T-cell (primary cell): ENCODE measurements at regions of chr7 and their contacts with region 1.

Region 1: GRCh38 chr7:47266131-47266706 is 315.7 kb downstream of the TNS3 start:
- DNase-seq: peak in 8 of 35 experiments; percentile 4 to 34 (median 10)
- ATAC-seq: no peak
- H3K4me3 ChIP-seq: no peak overlapping the region
- H3K4me3 Mint-ChIP-seq: no peak overlapping the region
- H3K27ac ChIP-seq: no peak overlapping the region
- H3K27ac Mint-ChIP-seq: no peak overlapping the region
- H3K4me1 ChIP-seq: no peaks in the 10 kb centered on the region
- H3K4me1 Mint-ChIP-seq: no peaks in the 10 kb centered on the region
- H3K27me3 ChIP-seq: no peaks in the 10 kb centered on the region
- H3K27me3 Mint-ChIP-seq: no peaks in the 10 kb centered on the region

Region 2: GRCh38 chr7:47281991-47282643 is 15.9 kb after region 1 on chr7:
- CTCF ChIA-PET with region 1: no interaction called
- POLR2A ChIA-PET with region 1: no interaction called
- DNase-seq: no peak
- ATAC-seq: no peak
- H3K4me3 ChIP-seq: no peak overlapping the region
- H3K4me3 Mint-ChIP-seq: no peak overlapping the region
- H3K27ac ChIP-seq: no peak overlapping the region
- H3K27ac Mint-ChIP-seq: no peak overlapping the region
- H3K4me1 ChIP-seq: no peaks in the 10 kb centered on the region
- H3K4me1 Mint-ChIP-seq: no peaks in the 10 kb centered on the region
- H3K27me3 ChIP-seq: peaks cover 0 to 6% of the 10 kb centered on the region in 2 experiments
- H3K27me3 Mint-ChIP-seq: no peaks in the 10 kb centered on the region

Region 3: DNA sequence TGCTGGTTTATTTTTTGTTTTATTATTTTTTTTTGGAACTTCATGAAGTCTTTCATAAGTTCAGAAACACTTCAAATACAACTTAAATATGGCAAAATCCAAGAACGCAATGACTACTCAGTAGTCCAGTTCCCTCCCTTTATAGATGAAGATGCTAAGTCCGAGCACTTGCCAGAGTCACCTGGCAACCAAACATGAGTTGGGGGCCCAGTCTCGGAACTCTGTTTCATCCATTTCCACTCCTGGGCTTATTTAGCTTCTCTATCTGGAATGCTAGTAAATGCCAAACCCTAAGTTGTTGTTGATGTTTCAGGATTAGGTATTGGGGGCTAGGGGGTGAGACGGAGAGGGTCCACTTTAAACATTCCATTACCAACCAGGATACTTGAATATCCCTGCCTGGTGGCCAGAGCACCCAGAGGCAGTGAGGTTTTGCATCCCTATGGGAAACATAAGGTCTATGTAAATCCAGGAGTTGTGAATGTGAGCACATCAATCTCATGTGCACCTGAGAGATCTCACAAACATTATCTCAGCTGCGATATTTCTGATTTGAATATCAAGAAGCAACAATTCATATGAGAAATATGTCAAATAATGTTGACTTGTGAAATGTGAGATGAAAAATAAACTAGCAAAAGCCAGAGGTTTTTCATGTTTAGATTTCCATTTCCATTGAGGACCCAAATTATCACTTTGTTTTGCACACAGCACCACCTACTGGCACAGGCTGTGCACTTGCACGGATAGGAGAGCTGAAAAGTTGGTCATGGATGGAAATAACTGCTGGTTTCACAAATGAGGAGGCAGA is 552.8 kb after region 1 on chr7:
- CTCF ChIA-PET with region 1: interaction called, 3 to 13 read pairs
- POLR2A ChIA-PET with region 1: no interaction called
- DNase-seq: peak in 20 of 35 experiments; percentile 7 to 46 (median 16)
- ATAC-seq: no peak
- H3K4me3 ChIP-seq: no peak overlapping the region
- H3K4me3 Mint-ChIP-seq: no peak overlapping the region
- H3K27ac ChIP-seq: no peak overlapping the region
- H3K27ac Mint-ChIP-seq: no peak overlapping the region
- H3K4me1 ChIP-seq: no peaks in the 10 kb centered on the region
- H3K4me1 Mint-ChIP-seq: no peaks in the 10 kb centered on the region
- H3K27me3 ChIP-seq: peaks cover 0 to 5% of the 10 kb centered on the region in 2 experiments
- H3K27me3 Mint-ChIP-seq: no peaks in the 10 kb centered on the region